ENCODE measurements at regions of chr19 and their contacts with region 1.

Region 1: GRCh38 chr19:45584332-45585157 is at the start of gene OPA3:
- DNase-seq: peak; percentile 88 to 100 (median 99)
- ATAC-seq: peak; percentile 92
- H3K4me3 ChIP-seq: peak within 1 kb of the TSS; percentile 85
- H3K4me3 Mint-ChIP-seq: peak within 1 kb of the TSS; percentile 90 to 99 (median 94)
- H3K27ac ChIP-seq: peak within 1 kb of the TSS; percentile 99
- H3K27ac Mint-ChIP-seq: peak within 1 kb of the TSS; percentile 97 to 100 (median 99)
- H3K4me1 ChIP-seq: peaks cover 6 to 10% of the 10 kb centered on the region in 2 donors
- H3K4me1 Mint-ChIP-seq: peaks cover 0 to 28% (median 20%) of the 10 kb centered on the region in 7 donors
- H3K27me3 ChIP-seq: no peaks in the 10 kb centered on the region
- H3K27me3 Mint-ChIP-seq: peaks cover 5 to 9% (median 7%) of the 10 kb centered on the region in 5 donors
- total RNA-seq, gene OPA3: 7.8 to 14.3 (median 9.0) TPM

Region 2: DNA sequence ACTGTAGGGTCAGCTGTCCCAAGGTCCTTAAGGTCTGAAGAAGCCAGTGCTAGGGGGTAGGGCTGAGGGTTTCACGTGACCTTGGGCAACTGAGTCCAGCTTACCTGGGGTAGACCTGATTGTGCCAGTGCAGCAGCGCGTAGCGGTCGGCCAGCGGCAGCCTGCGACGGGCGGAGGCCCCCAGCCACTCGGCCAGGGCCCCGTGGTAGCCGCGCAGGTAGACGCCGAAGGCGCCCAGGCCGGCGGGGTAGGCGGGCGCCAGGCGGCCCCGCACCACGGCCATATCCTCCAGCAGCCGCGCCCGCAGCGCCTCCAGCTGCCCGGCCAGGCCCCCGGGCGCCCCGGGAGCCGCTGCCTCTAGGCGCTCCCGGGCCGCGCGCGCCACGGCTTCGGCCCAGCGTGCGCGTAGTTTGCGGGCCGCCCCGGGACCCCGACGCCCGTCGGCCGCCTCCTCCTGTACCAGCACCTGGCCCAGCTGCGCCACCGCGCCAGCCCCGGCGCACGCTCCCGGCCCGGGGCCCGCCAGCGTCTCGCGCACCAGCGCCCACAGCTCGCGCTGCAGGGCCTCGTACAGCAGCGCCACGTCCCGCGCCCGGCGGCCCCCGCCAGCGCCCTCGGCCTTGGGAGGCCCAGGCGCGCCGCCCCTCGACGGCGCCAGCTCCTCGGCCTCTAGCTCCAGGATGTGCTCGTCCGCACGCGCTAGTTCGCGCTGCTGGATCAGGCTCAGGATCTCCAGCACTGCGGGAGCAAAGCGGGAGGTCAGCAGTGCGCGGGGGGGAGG is 350.3 kb before region 1 on chr19:
- CTCF ChIA-PET with region 1: no interaction called
- POLR2A ChIA-PET with region 1: no interaction called
- intact Hi-C with region 1: no loop called
- DNase-seq: no peak
- ATAC-seq: no peak
- H3K4me3 ChIP-seq: no peak overlapping the region
- H3K4me3 Mint-ChIP-seq: no peak overlapping the region
- H3K27ac ChIP-seq: no peak overlapping the region
- H3K27ac Mint-ChIP-seq: no peak overlapping the region
- H3K4me1 ChIP-seq: no peaks in the 10 kb centered on the region
- H3K4me1 Mint-ChIP-seq: peaks cover 0 to 9% (median 0%) of the 10 kb centered on the region in 7 donors
- H3K27me3 ChIP-seq: peaks cover 0 to 7% of the 10 kb centered on the region in 2 donors
- H3K27me3 Mint-ChIP-seq: peaks cover 25 to 53% (median 34%) of the 10 kb centered on the region in 5 donors

Region 3: DNA sequence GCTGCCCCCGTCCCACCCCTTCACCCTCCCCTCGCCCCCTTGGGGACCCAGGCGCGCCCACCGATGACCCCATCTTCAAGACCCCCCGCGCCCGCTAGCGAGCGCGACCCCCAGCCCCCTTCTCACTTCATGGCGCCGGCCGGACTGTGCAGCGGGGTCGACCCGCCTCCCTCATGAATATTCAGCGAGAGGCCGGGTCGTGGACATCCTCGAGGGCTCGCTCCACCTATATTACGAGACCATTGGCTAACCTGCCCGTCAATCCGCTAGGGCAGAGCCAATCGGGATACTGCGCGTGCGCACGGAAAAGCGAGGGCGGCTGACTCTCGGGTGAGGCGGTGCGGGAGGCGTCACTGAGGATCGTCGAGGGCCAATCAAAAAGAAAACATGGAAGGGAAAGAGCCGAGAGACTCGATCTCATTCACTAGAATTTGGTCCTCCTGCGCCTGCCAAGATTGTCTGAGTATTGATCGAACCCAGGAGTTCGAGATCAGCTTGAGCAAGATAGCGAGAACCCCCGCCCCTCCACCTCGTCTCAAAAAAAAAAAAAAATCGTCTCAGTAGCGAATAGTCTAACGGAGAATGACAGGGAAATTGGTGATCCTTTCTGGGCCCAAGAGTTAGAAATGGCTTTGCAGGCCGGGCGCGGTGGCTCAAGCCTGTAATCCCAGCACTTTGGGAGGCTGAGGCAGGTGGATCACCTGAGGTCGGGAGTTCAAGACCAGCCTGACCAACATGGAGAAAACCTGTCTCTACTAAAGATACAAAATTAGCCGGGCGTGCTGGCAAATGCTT is 213.9 kb before region 1 on chr19 and contains the start of gene ERCC2:
- CTCF ChIA-PET with region 1: no interaction called
- POLR2A ChIA-PET with region 1: no interaction called
- intact Hi-C with region 1: loop called in 1 of 2 experiments (anchors 1 kb)
- DNase-seq: peak; percentile 98 to 100 (median 99)
- ATAC-seq: peak; percentile 99
- H3K4me3 ChIP-seq: peak within 1 kb of the TSS; percentile 72
- H3K4me3 Mint-ChIP-seq: peak within 1 kb of the TSS; percentile 84 to 98 (median 95)
- H3K27ac ChIP-seq: peak within 1 kb of the TSS; percentile 67
- H3K27ac Mint-ChIP-seq: peak within 1 kb of the TSS; percentile 87 to 99 (median 98)
- H3K4me1 ChIP-seq: peaks cover 0 to 6% of the 10 kb centered on the region in 2 donors
- H3K4me1 Mint-ChIP-seq: peaks cover 5 to 21% (median 18%) of the 10 kb centered on the region in 7 donors
- H3K27me3 ChIP-seq: no peaks in the 10 kb centered on the region
- H3K27me3 Mint-ChIP-seq: peaks cover 0 to 2% (median 0%) of the 10 kb centered on the region in 5 donors
- total RNA-seq, gene ERCC2: 14.4 to 25.1 (median 19.2) TPM

Region 4: DNA sequence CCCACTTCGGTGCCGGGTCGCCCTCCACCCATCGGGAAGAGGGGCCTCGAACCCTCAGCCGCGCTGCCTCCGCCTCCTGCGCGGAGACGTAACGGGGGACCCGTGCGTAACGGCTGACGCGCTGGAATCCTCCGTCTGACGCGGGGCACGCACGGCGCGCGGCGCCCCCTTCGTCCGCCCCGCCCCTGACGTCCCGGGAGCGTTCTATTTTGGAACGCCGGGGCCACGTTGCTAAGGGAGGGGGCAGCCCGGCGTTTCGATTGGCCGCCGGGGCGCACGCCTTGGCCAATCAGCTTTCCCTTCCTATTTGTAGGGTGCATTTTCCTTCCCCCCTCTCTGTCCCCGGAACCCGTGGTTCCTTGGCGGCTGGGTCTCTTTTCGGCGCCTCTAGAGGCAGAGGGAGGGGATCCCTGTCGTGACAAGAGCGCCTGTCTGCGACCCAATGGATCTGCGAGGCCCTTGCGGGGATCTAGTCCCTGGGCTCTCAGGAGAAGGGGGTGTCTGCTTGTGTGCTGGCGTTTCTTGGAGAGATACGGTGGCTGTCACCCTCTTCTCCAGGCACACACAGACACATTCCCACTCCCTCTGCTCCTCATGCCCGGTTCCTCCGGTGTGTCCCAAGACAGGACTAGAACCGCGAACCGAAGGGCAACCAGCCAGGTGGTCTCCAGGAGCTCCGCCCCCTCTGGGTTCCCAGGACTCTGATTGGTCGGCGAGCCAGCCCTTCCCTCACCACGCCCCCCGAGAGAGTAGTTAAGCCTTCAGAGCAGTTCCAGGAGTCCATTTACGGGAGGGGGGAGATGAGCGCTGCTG is 115.2 kb before region 1 on chr19:
- CTCF ChIA-PET with region 1: no interaction called
- POLR2A ChIA-PET with region 1: no interaction called
- intact Hi-C with region 1: loop called in 1 of 2 experiments (anchors 1 kb)
- DNase-seq: peak; percentile 79 to 98 (median 97)
- ATAC-seq: peak; percentile 70
- H3K4me3 ChIP-seq: peak overlapping the region; percentile 99
- H3K4me3 Mint-ChIP-seq: peak overlapping the region; percentile 87 to 96 (median 94)
- H3K27ac ChIP-seq: peak overlapping the region; percentile 98
- H3K27ac Mint-ChIP-seq: peak overlapping the region; percentile 90 to 100 (median 99)
- H3K4me1 ChIP-seq: peaks cover 10 to 16% of the 10 kb centered on the region in 2 donors
- H3K4me1 Mint-ChIP-seq: peaks cover 5 to 39% (median 19%) of the 10 kb centered on the region in 7 donors
- H3K27me3 ChIP-seq: no peaks in the 10 kb centered on the region
- H3K27me3 Mint-ChIP-seq: peaks cover 9 to 57% (median 17%) of the 10 kb centered on the region in 5 donors

Region 5: DNA sequence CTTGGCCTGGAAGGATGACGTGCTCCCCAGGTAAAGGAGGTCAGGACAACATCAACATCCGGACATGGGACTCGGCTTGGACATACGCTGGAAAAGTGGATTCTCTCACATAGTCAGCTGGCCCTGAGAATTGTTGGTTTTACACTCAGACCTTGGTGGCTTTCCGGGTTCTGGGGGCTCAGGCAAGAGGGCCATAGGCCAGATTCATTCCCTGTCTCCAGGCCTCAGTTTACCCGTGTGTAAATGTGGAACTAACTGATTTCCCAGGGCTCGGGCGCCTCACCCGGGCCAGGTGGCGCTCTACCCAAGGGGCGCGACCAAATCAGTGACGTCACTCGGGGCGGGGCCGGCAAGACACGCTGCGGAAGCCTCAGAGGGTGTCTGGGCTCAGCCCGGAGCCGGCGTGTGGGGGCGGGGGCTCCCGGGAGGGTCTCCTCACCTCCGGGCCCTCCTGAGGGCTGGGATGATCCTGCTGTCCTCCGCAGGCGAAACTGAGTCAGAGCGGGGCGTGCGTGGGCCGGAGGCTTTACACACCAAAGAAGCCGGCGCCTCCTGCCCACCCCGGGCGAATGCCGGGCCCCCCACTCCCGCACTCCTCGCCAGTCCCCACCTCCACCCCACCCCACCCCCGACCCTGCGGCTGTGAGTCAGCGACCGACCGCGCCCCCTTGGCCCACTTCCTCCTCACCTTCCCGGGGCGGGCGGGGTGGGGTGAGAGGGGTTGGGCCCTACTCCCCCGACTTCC is 78.1 kb before region 1 on chr19:
- CTCF ChIA-PET with region 1: no interaction called
- POLR2A ChIA-PET with region 1: no interaction called
- intact Hi-C with region 1: loop called (anchors 1 kb)
- DNase-seq: peak; percentile 95 to 99 (median 98)
- ATAC-seq: peak; percentile 88
- H3K4me3 ChIP-seq: peak overlapping the region; percentile 99
- H3K4me3 Mint-ChIP-seq: peak overlapping the region; percentile 91 to 96 (median 94)
- H3K27ac ChIP-seq: peak overlapping the region; percentile 87
- H3K27ac Mint-ChIP-seq: peak overlapping the region; percentile 91 to 98 (median 97)
- H3K4me1 ChIP-seq: peaks cover 14 to 20% of the 10 kb centered on the region in 2 donors
- H3K4me1 Mint-ChIP-seq: peaks cover 29 to 46% (median 34%) of the 10 kb centered on the region in 7 donors
- H3K27me3 ChIP-seq: no peaks in the 10 kb centered on the region
- H3K27me3 Mint-ChIP-seq: no peaks in the 10 kb centered on the region

Region 6: DNA sequence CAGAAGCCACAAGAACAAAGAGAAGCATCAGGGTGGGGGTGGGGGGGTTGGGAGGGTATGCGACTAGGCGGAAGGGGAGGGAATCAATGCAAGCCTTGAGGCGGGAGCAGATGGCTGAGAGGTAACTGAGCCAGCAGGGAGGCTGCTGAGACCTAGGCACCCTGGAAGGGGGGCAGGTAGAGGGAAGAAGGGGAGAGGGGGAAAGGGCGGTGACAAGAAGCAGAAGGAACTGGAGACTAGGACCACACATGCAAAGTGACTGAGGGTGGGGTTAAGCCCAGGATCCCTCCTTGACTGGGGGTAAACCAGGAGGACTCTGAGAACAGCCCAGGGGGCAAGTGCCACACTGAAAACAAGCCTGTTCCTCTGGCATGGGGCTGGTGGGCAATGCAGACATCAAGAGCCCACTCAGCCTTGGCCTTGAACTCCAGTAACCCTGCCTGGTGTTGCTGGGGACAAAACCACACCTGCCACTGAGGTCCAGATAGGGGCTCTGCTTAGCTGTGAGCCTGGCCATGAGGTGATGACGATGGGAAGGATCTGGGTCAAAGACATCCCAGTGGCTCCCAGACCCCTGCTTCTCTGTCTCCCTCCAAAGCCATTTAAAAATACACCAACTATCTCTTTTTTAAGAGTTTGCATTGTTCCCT is 20.3 kb before region 1 on chr19:
- CTCF ChIA-PET with region 1: no interaction called
- POLR2A ChIA-PET with region 1: interaction called, 4 read pairs
- intact Hi-C with region 1: loop called in 1 of 2 experiments (anchors 1 kb)
- DNase-seq: peak in 1 of 9 donors; percentile 12
- ATAC-seq: peak; percentile 24
- H3K4me3 ChIP-seq: peak overlapping the region; percentile 17
- H3K4me3 Mint-ChIP-seq: peak overlapping the region in 9 of 10 donors; percentile 42 to 81 (median 73)
- H3K27ac ChIP-seq: peak overlapping the region; percentile 70
- H3K27ac Mint-ChIP-seq: peak overlapping the region; percentile 5 to 97 (median 94)
- H3K4me1 ChIP-seq: peaks cover 0 to 30% of the 10 kb centered on the region in 2 donors
- H3K4me1 Mint-ChIP-seq: peaks cover 14 to 56% (median 40%) of the 10 kb centered on the region in 7 donors
- H3K27me3 ChIP-seq: no peaks in the 10 kb centered on the region
- H3K27me3 Mint-ChIP-seq: no peaks in the 10 kb centered on the region

Region 7: GRCh38 chr19:45670670-45671453 is 86.3 kb after region 1 on chr19:
- CTCF ChIA-PET with region 1: no interaction called
- POLR2A ChIA-PET with region 1: no interaction called
- intact Hi-C with region 1: no loop called
- DNase-seq: peak in 4 of 9 donors; percentile 14 to 87 (median 31)
- ATAC-seq: peak; percentile 58
- H3K4me3 ChIP-seq: no peak overlapping the region
- H3K4me3 Mint-ChIP-seq: peak overlapping the region in 8 of 10 donors; percentile 39 to 96 (median 74)
- H3K27ac ChIP-seq: no peak overlapping the region
- H3K27ac Mint-ChIP-seq: peak overlapping the region in 1 of 9 donors; percentile 13
- H3K4me1 ChIP-seq: peaks cover 15 to 25% of the 10 kb centered on the region in 2 donors
- H3K4me1 Mint-ChIP-seq: peaks cover 30 to 39% (median 32%) of the 10 kb centered on the region in 7 donors
- H3K27me3 ChIP-seq: no peaks in the 10 kb centered on the region
- H3K27me3 Mint-ChIP-seq: peaks cover 0 to 22% (median 17%) of the 10 kb centered on the region in 5 donors

Region 8: GRCh38 chr19:45862564-45863334 is 278.2 kb after region 1 on chr19 and contains the start of gene SYMPK:
- CTCF ChIA-PET with region 1: no interaction called
- POLR2A ChIA-PET with region 1: no interaction called
- intact Hi-C with region 1: loop called (anchors 1 kb)
- DNase-seq: peak; percentile 93 to 99 (median 99)
- ATAC-seq: peak; percentile 99
- H3K4me3 ChIP-seq: peak within 1 kb of the TSS; percentile 95
- H3K4me3 Mint-ChIP-seq: peak within 1 kb of the TSS; percentile 90 to 100 (median 96)
- H3K27ac ChIP-seq: peak within 1 kb of the TSS; percentile 86
- H3K27ac Mint-ChIP-seq: peak within 1 kb of the TSS; percentile 84 to 99 (median 95)
- H3K4me1 ChIP-seq: peaks cover 12 to 15% of the 10 kb centered on the region in 2 donors
- H3K4me1 Mint-ChIP-seq: peaks cover 29 to 37% (median 36%) of the 10 kb centered on the region in 7 donors
- H3K27me3 ChIP-seq: peaks cover 0 to 4% of the 10 kb centered on the region in 2 donors
- H3K27me3 Mint-ChIP-seq: peaks cover 6 to 39% (median 21%) of the 10 kb centered on the region in 5 donors
- total RNA-seq, gene SYMPK: 81.3 to 110 (median 96.4) TPM